Activated CD8-positive, alpha-beta T cell treated with anti-CD3 and anti-CD28 coated beads, Interleukin-2, amount 10 ng/mL, durations not matched to agents 7 days and 5 days (primary cell): ENCODE measurements at regions of chr2 and their contacts with region 1.

Region 1: GRCh38 chr2:143259368-143259958 is 130.2 kb downstream of the ARHGAP15 start:
- DNase-seq: peak; percentile 87
- ATAC-seq: peak; percentile 40
- H3K4me3 Mint-ChIP-seq: peak overlapping the region; percentile 67
- H3K27ac Mint-ChIP-seq: peak overlapping the region; percentile 98
- H3K4me1 Mint-ChIP-seq: peaks cover 79% of the 10 kb centered on the region
- H3K27me3 Mint-ChIP-seq: no peaks in the 10 kb centered on the region

Region 2: GRCh38 chr2:143034292-143035074 is 225.0 kb before region 1 on chr2:
- CTCF ChIA-PET with region 1: interaction called, 16 read pairs
- POLR2A ChIA-PET with region 1: no interaction called
- DNase-seq: peak; percentile 78
- ATAC-seq: peak; percentile 88
- H3K4me3 Mint-ChIP-seq: no peak overlapping the region
- H3K27ac Mint-ChIP-seq: no peak overlapping the region
- H3K4me1 Mint-ChIP-seq: peaks cover 8% of the 10 kb centered on the region
- H3K27me3 Mint-ChIP-seq: peaks cover 6% of the 10 kb centered on the region

Region 3: DNA sequence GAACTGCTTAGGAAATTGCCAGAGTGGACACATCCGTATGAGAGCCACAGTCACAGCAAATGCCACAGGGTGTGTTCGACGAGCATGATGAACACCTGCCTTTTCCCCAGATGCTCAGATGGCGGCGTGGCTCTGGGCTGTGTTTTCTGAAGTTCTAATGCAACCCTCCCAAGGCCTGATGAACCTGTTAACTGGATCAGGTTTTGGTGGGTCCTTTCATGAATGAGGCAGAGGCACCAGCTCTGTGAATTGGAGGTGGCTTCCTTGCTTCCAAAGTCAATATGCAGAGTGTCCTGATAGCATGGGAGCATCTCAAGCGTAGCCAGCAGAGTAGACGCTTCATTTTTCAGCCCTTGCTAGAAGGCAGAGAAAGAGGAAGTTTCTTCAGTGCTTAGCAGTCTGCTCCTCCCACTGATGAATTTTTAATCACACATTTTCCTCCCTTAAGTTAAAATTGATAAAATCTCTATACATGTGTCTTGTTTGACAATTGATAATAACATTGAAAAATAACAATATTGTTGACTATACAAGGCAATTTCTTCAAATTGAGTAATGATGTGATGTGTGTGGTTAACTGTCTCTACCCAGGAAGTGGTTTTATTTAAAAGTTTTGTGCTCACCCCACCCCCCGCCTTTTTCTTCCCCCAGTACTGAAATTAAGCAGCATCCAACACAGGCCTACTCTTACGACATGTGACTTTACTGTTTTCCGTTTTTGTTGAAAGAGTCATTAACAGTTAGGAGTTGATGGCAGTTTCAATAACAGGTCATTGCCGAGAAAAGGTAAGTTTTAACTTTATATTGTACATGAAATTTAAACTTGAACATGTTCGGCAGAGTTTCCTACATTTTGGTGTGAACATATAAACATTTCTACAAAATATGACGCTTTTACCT is 130.5 kb before region 1 on chr2 and contains the start of gene ARHGAP15:
- CTCF ChIA-PET with region 1: interaction called, 106 read pairs
- POLR2A ChIA-PET with region 1: interaction called, 32 read pairs
- DNase-seq: peak; percentile 90
- ATAC-seq: peak; percentile 86
- H3K4me3 Mint-ChIP-seq: peak within 1 kb of the TSS; percentile 79
- H3K27ac Mint-ChIP-seq: peak within 1 kb of the TSS; percentile 100
- H3K4me1 Mint-ChIP-seq: peaks cover 48% of the 10 kb centered on the region
- H3K27me3 Mint-ChIP-seq: no peaks in the 10 kb centered on the region
- total RNA-seq, gene ARHGAP15: 154 to 158 TPM

Region 4: GRCh38 chr2:143175438-143175837 is 84.0 kb before region 1 on chr2:
- CTCF ChIA-PET with region 1: interaction called, 19 read pairs
- POLR2A ChIA-PET with region 1: no interaction called
- DNase-seq: no peak
- ATAC-seq: no peak
- H3K4me3 Mint-ChIP-seq: no peak overlapping the region
- H3K27ac Mint-ChIP-seq: peak overlapping the region; percentile 22
- H3K4me1 Mint-ChIP-seq: peaks cover 62% of the 10 kb centered on the region
- H3K27me3 Mint-ChIP-seq: no peaks in the 10 kb centered on the region

Region 5: DNA sequence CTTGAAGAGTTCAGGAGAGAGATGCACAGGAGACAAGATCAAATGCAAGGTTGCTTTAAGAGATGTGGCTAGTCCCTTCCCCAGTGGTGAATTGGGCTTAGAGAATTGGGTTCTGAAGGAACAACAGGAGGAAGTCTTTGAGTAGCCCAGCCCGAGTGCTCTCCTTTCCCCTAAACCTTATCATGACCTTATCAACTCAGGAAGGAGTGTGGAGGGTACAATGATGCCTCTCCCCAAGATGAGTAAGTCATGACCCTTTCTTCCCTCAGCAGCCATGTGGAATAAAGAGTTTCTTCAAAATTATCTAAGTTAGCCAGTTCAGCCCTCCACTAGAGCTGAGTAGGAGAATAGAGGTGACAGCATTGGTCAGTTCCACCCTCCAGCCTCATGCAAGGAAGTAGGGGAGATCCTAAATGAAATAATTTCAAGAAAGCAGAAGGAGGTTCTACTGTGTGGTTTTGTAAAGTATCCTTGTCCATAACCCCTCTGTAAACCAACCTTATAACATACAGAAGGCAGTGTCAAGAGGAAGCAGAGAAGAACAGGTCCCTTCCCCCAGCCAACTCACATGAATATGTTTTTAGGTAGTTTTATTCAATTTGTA is 41.8 kb before region 1 on chr2:
- CTCF ChIA-PET with region 1: interaction called, 47 read pairs
- POLR2A ChIA-PET with region 1: no interaction called
- DNase-seq: no peak
- ATAC-seq: peak; percentile 44
- H3K4me3 Mint-ChIP-seq: no peak overlapping the region
- H3K27ac Mint-ChIP-seq: peak overlapping the region; percentile 73
- H3K4me1 Mint-ChIP-seq: peaks cover 30% of the 10 kb centered on the region
- H3K27me3 Mint-ChIP-seq: no peaks in the 10 kb centered on the region

Region 6: DNA sequence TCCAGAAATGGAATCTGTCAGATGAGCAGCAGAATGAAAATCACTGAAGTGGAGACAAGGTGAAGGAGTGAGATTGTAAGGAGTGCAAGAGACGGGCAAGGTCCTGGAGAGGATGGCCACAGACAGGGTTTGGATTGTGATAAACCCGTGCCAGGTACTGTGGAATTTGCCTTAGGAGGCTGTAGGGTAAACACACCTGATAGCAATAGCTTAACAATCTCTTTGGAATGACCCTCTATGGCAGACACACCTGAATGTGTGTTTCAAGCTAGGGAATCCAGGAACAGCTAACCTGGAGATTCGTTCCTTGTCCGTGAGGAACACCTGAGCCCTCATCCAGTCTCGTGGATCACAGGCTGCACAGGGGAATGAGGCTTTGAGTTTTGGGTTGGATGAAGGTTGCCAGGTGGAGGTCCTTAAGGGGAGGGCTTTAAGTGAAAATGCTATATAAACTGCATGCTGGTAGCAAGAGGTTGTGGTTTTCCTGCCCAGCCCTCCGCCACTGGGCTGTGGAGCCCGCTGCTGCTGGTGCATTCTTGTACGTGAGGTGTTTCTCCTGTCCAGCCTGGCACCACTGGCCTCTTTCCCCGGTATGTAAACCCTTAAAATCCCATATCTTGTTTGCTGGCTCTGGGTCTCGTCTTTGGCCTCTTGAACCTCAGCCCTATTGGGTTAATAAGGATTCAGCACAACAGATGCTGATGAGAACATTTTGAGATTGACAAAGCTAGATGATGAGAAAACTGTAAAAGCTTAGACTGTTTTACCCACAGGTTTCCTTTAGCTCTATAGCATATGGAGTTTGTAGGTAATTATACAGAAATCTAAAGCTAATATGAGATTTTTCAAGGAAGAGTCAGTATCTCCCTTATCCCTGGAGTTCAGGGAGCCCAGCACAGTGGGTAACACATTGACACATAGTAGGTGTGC is 12.4 kb before region 1 on chr2:
- CTCF ChIA-PET with region 1: interaction called, 33 read pairs
- POLR2A ChIA-PET with region 1: interaction called, 12 read pairs
- DNase-seq: peak; percentile 54
- ATAC-seq: peak; percentile 69
- H3K4me3 Mint-ChIP-seq: no peak overlapping the region
- H3K27ac Mint-ChIP-seq: no peak overlapping the region
- H3K4me1 Mint-ChIP-seq: peaks cover 28% of the 10 kb centered on the region
- H3K27me3 Mint-ChIP-seq: no peaks in the 10 kb centered on the region

Region 7: GRCh38 chr2:143422681-143423080 is 163.2 kb after region 1 on chr2:
- CTCF ChIA-PET with region 1: no interaction called
- POLR2A ChIA-PET with region 1: no interaction called
- DNase-seq: peak; percentile 51
- ATAC-seq: peak; percentile 77
- H3K4me3 Mint-ChIP-seq: no peak overlapping the region
- H3K27ac Mint-ChIP-seq: peak overlapping the region; percentile 58
- H3K4me1 Mint-ChIP-seq: peaks cover 33% of the 10 kb centered on the region
- H3K27me3 Mint-ChIP-seq: no peaks in the 10 kb centered on the region